Heart right ventricle (tissue), 16 donors: ENCODE measurements at regions of chr17 and their contacts with region 1.

Region 1: DNA sequence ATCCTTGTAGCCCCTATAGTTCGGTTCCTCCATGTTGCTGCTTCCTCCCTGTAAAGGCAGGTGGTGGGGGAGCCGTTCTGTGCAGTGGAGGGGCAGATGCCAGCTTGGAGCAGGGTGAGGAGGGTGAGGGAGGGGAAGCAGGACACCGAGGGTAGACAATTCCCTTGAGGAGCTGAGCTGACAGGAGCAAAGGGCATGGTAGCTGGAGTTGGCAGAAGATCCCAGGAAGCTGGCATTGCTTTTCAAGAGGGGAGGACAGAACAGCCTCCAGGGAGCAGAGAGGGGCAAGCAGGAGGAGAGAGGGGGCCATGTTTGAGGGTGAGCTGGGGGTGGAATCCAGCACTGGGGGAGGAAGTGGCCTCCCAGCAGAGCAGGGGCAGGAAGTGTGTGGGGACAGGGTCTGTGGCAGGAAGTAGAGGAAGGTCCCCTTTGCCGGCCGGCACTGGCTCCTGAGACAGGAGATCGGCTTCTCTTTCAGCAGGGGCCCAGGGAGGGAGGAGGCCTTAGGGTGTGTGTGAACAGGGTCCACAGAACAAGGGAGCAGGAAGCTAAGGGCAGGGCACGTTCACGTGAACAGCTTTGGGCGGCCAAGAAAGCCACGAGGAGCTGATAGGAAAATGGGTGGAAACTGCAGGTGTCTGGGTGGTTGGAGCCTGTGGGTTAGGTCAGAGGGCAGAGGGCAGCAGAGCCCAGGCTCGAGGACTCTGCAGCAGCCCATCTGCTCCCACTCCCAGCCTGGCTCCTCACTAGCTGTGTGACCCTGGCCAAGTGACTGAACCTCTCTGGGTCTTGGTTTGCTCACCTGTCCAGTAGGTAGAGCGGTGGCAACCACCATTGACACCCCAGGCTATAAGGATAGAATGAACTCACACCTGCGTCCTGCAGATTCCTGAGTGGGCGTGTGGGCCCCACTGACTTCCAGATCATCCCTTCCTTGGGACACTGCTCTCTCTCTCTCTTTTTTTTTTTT is 17.5 kb upstream of the SPNS2 start:
- DNase-seq: no peak
- ATAC-seq: peak in 7 of 8 donors; percentile 14 to 58 (median 41)
- H3K4me3 ChIP-seq: no peak overlapping the region
- H3K27ac ChIP-seq: peak overlapping the region in 3 of 10 donors; percentile 32 to 65 (median 35)
- H3K4me1 ChIP-seq: peaks cover 3 to 34% (median 22%) of the 10 kb centered on the region in 9 donors
- H3K27me3 ChIP-seq: no peaks in the 10 kb centered on the region
- CTCF ChIP-seq: no peak

Region 2: DNA sequence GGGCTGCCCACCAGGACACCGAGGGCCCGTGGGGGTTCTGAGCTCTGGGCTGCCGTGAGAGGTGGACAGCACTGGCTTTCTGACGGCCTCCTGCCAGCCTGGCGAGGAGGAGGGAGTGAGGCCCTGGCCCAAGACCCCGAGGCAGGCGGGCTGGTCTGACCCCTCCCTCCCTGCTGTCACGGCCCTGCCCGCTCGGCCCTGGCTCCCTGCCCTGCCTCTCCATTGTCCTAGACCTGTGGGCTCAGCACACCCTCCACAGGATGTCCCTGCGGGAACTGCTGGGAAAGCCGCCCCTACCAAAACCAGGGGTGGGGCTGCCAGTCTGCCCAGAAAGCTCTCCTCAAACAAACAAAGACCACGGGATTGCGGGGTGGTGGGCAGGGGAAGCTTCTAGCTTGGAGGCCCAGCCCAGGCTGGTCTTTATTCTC is 38.2 kb after region 1 on chr17:
- intact Hi-C with region 1: loop called in 1 of 10 experiments (anchors 2 kb)
- DNase-seq: peak; percentile 83 to 84
- ATAC-seq: peak; percentile 69 to 86 (median 83)
- H3K4me3 ChIP-seq: peak overlapping the region in 1 of 10 donors; percentile 1
- H3K27ac ChIP-seq: peak overlapping the region; percentile 78 to 96 (median 90)
- H3K4me1 ChIP-seq: peaks cover 14 to 58% (median 44%) of the 10 kb centered on the region in 9 donors
- H3K27me3 ChIP-seq: no peaks in the 10 kb centered on the region
- CTCF ChIP-seq: no peak